Aorta (tissue), 5 donors: ENCODE measurements at regions of chr2 and their contacts with region 1.

Region 1: DNA sequence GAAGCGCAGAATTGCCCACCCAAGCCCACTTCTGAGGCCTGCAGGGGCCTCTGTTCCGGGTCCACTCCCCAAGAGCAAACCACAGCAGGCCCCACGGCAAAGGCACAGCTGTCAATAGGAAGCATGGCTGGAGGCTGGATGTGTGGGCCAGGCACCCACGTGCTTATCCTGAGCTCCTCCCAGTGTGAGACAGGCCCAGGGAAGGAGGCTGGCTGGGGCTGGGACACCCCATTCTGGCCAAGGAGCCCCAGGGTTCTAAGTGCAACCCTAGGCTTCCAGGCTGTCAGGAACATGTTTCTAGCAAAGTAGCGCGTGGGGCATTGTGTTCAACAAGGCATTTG is 6.0 kb upstream of the RAB17 start:
- DNase-seq: peak in 1 of 2 donors; percentile 69
- ATAC-seq: no peak
- H3K4me3 ChIP-seq: no peak overlapping the region
- H3K27ac ChIP-seq: peak overlapping the region in 1 of 2 donors; percentile 7
- H3K4me1 ChIP-seq: peaks cover 0 to 2% of the 10 kb centered on the region in 2 donors
- H3K27me3 ChIP-seq: no peaks in the 10 kb centered on the region

Region 2: GRCh38 chr2:237244976-237245646 is 351.4 kb before region 1 on chr2:
- intact Hi-C with region 1: no loop called
- DNase-seq: no peak
- ATAC-seq: no peak
- H3K4me3 ChIP-seq: no peak overlapping the region
- H3K27ac ChIP-seq: no peak overlapping the region
- H3K4me1 ChIP-seq: peaks cover 0 to 4% of the 10 kb centered on the region in 2 donors
- H3K27me3 ChIP-seq: no peaks in the 10 kb centered on the region

Region 3: GRCh38 chr2:237280229-237280628 is 316.3 kb before region 1 on chr2:
- intact Hi-C with region 1: no loop called
- DNase-seq: no peak
- ATAC-seq: peak; percentile 40
- H3K4me3 ChIP-seq: no peak overlapping the region
- H3K27ac ChIP-seq: no peak overlapping the region
- H3K4me1 ChIP-seq: peaks cover 0 to 2% of the 10 kb centered on the region in 2 donors
- H3K27me3 ChIP-seq: no peaks in the 10 kb centered on the region

Region 4: DNA sequence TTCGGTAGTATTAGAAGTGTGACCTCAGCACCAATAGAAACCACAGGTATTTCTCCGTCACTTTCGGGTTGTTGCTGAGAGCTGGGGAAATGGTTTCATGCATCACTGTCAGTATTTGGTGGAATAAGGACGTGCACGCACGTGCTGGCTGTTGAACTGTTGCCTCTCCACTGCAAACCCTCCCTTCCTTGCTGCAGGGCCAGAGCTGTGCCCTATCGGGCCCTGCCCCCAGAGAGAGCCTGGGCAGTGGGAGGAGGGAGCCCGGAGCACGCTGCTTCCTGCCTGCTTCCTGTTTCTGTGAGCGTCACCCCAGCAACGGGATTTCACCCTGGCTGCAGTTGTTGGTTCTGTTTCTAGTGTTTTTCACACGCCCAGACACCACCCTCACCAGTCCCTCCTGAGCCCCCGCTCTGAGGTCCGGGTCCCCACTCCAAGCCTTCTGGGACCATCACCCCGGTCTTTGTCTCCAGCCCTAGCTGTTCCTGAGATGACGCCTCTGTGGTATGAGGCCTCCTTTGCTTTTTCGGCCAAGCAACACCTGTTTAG is 78.3 kb after region 1 on chr2:
- intact Hi-C with region 1: loop called in 1 of 2 experiments (anchors 5 kb)
- DNase-seq: peak; percentile 93 to 95
- ATAC-seq: peak; percentile 89
- H3K4me3 ChIP-seq: peak overlapping the region in 1 of 2 donors; percentile 23
- H3K27ac ChIP-seq: peak overlapping the region; percentile 92 to 99
- H3K4me1 ChIP-seq: peaks cover 2 to 4% of the 10 kb centered on the region in 2 donors
- H3K27me3 ChIP-seq: no peaks in the 10 kb centered on the region